Dendritic cell treated with granulocyte-macrophage colony-stimulating factor and Interleukin-4, amounts not matched to agents 40 ng/mL and 50 ng/mL, for 4 days (primary cell): ENCODE measurements at regions of chr13 and their contacts with region 1.

Region 1: DNA sequence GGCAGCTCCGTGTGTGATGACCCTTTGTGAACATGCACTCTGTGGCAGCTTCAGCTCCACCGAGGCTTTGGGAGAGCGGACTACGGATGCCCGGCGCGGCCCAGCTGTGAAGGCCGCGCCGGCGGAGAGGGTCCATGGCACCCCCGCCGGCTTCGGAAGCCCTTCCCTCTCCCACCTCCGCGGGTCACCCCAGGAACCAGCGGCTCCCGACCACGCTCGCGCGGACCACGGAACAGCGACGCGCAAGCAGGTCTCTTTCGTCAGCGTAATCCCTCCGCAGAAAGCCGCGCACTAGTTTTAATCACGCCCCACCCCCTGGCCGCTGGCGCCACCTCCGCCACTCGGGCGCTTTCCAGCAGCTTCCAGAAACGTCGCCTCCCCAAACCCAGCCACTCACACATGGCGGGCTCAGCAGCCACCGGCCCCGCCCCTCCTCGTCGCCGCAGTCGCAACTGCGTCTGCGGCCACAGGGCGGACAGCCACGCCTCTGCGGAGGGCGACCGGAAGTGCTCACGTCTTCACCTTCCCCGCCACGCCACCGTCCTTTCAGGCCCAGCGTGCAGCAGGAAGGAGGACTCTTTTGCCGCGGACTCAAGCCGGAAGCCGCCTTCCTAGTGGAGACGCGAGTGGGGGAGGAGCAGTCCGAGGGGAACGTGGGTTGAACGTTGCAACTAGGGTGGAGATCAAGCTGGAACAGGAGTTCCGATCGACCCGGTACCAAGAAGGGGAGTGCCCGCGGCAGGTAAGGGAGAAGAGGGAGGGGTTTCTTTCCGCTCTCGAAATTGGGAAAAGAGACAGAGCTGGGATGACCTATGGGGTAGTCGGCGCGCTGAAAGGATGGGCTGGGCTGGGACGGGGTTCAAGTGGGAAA is at the start of gene USPL1:
- H3K4me3 Mint-ChIP-seq: no peak within 1 kb of the TSS
- H3K27ac Mint-ChIP-seq: no peak within 1 kb of the TSS
- H3K4me1 Mint-ChIP-seq: peaks cover 18% of the 10 kb centered on the region
- H3K27me3 Mint-ChIP-seq: no peaks in the 10 kb centered on the region

Region 2: DNA sequence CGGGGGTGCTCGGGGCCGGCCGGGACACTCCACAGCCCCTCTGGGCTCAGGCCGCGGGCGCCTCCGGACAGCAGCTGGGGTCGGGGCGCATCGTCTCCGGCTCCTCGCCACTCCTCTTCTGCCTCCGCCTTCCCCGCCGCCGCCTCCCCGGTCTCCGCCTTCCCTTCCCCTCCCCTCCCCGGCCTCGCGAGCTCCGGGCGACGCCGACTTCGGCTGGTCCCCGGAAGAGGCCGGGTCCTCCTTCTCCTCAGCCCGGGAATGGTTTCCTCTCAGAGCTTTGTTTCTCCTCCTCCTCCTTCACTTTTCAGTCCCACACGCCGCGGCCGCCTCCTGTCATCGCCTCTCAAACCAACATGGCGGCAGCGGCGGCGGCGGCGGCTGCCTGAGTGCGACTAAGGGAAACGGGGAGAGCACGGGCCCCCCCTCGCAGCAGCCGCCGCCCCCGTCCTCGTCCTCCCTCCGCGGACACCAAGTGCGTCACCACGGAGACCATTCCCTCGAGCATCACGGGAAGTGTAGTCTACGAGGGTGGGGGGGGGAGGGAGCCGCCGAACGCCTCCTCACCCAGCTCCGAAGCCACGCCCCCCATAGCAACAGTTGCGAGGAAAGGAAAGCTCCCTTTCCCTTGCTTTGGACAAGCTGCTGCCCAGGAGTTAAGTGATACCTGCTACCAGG is 767.2 kb before region 1 on chr13 and contains the start of gene UBL3:
- intact Hi-C with region 1: loop called (anchors 5 kb)
- H3K4me3 Mint-ChIP-seq: peak within 1 kb of the TSS; percentile 92
- H3K27ac Mint-ChIP-seq: peak within 1 kb of the TSS; percentile 99
- H3K4me1 Mint-ChIP-seq: peaks cover 41% of the 10 kb centered on the region
- H3K27me3 Mint-ChIP-seq: no peaks in the 10 kb centered on the region

Region 3: GRCh38 chr13:30465585-30466357 is 151.8 kb before region 1 on chr13 and contains the start of gene HMGB1:
- intact Hi-C with region 1: loop called (anchors 5 kb)
- H3K4me3 Mint-ChIP-seq: peak within 1 kb of the TSS; percentile 93
- H3K27ac Mint-ChIP-seq: peak within 1 kb of the TSS; percentile 96
- H3K4me1 Mint-ChIP-seq: peaks cover 27% of the 10 kb centered on the region
- H3K27me3 Mint-ChIP-seq: no peaks in the 10 kb centered on the region

Region 4: DNA sequence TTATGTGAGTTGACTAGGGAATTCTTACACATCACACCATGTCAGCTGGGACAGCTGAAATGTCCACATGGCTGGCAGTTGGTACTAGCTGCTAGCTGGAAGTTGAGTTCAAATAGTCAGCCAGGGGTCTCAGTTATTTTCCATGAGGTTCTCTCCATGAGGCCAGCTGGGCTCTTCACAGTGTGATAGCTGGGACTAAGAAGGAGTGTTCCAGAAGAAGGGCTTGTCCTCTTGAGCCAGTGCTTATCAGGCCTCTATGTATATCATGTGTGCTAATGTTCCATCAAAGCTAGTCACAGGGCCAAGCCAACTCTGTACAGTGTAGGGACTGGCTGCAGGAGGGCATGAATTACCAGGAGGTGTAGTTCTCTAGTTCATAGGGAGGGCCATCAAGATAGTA is 12.0 kb after region 1 on chr13:
- intact Hi-C with region 1: loop called (anchors 1 kb)
- H3K4me3 Mint-ChIP-seq: no peak overlapping the region
- H3K27ac Mint-ChIP-seq: no peak overlapping the region
- H3K4me1 Mint-ChIP-seq: peaks cover 11% of the 10 kb centered on the region
- H3K27me3 Mint-ChIP-seq: no peaks in the 10 kb centered on the region

Region 5: GRCh38 chr13:31044377-31045285 is 427.1 kb after region 1 on chr13:
- intact Hi-C with region 1: loop called (anchors 5 kb)
- H3K4me3 Mint-ChIP-seq: no peak overlapping the region
- H3K27ac Mint-ChIP-seq: no peak overlapping the region
- H3K4me1 Mint-ChIP-seq: peaks cover 51% of the 10 kb centered on the region
- H3K27me3 Mint-ChIP-seq: peaks cover 19% of the 10 kb centered on the region